ENCODE measurements at regions of chr19 and their contacts with region 1.

Region 1: DNA sequence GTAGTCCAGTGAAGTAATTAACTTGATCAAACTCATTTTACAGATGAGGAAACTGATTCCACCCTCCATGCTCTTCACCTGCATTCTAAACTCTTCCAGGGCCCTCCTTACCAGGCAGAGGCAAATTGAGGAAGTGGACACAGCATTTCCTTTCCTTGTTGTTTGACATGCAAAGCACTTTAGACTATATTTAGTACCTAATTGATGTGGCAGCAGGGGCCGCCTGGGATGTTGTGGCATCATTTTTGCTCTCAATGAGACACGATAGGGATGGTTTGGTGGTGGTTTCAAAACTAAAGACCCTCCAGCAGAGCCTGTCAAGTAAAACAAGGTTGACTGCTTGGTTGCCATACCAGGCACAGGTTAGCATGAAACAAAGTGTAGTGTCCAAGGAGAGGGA is 7.9 kb downstream of the SIPA1L3 start:
- DNase-seq: peak; percentile 88
- H3K4me3 ChIP-seq: peak overlapping the region; percentile 58
- H3K27ac ChIP-seq: peak overlapping the region; percentile 87
- H3K4me1 ChIP-seq: peaks cover 78% of the 10 kb centered on the region
- CTCF ChIP-seq: no peak

Region 2: GRCh38 chr19:37926711-37927110 is 11.8 kb after region 1 on chr19:
- CTCF ChIA-PET with region 1: no interaction called
- POLR2A ChIA-PET with region 1: interaction called, 26 read pairs
- intact Hi-C with region 1: loop called (anchors 1 kb)
- DNase-seq: peak; percentile 70
- H3K4me3 ChIP-seq: peak overlapping the region; percentile 58
- H3K27ac ChIP-seq: peak overlapping the region; percentile 99
- H3K4me1 ChIP-seq: peaks cover 97% of the 10 kb centered on the region
- CTCF ChIP-seq: no peak

Measured in OCI-LY7 (cell line).